Lower lobe of right lung (tissue), 2 donors: ENCODE measurements at regions of chr9 and their contacts with region 1.

Region 1: DNA sequence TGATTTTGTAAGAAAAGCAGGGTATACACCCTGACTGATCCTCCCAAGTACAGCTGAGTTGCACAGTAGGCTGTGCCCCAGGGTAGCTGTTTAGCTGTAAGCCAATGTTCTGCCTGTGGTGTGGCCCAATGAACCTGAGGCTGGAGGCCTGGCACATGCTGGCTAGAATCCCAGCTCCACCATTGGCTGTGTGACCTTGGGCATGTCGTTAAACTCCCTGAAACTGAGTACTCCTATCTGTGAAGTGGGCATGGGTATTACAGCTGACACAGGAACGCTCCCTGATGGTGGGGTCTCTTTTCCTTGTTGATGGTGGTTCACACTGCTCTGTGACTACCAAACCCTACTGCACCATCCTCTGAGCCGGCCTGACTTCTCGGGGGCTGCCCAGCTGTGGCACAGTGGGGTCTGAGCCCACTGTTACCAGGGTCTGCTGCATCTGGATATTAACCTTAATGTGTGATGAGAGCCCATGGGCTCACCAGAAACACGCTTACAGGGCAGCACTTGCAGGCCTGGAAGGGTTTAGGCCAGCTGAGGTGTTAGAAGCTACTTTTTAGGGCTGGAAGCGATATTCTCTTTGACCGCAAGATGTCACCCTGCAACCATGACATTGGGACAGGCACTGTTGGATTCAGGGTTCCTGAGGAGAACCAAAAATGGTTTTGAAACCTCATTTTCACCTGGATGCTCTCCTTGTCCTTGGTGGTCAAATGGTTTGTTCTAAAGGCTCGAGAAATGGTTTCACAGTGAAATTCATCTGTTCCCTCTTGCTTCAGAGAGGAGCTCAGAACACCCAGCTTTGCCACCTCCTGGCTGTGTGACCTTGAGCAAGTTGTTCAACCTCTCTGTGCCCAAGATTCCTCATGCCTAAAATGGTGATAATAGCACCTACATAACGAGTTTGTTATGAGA is 6.8 kb upstream of the GADD45G start:
- DNase-seq: no peak
- ATAC-seq: peak; percentile 62 to 69
- H3K4me3 ChIP-seq: no peak overlapping the region
- H3K27ac ChIP-seq: no peak overlapping the region
- H3K4me1 ChIP-seq: peaks cover 4% of the 10 kb centered on the region
- H3K27me3 ChIP-seq: no peaks in the 10 kb centered on the region
- CTCF ChIP-seq: peak; percentile 85

Region 2: DNA sequence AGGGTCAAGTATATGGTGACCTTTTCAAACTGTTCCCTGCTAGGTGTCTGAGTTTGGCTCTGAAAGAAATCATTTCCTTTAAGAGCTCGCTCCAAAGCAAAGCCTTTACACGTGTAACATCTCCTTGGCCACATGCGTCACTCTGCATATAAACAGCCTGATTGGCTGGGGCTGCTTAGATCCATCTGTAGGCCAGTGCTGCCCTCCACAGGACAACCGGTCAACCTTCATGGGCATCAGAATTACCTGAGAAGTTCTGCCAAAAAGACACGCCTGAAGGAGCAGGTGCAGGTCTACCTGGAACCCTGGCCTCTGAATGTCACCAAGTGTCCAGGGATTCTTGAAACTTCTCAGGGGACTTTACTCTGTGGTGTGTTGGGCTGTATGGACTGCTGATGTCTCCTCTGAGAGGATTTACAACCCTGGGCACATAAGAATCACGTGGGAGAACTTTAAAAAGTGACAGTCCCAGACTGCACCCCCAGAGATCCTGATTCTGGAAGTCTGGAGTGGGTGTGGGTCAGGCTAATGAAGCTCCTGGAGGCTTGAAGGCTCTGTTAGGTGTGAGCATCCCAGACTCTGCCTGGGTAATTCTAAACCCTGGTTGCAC is 504.4 kb after region 1 on chr9:
- intact Hi-C with region 1: loop called (anchors 5 kb)
- DNase-seq: peak; percentile 88
- ATAC-seq: peak; percentile 96 to 97
- H3K4me3 ChIP-seq: no peak overlapping the region
- H3K27ac ChIP-seq: no peak overlapping the region
- H3K4me1 ChIP-seq: peaks cover 18% of the 10 kb centered on the region
- H3K27me3 ChIP-seq: no peaks in the 10 kb centered on the region
- CTCF ChIP-seq: peak; percentile 88